ENCODE measurements at regions of chr10 and their contacts with region 1.

Region 1: GRCh38 chr10:88835096-88835909 is 16.3 kb downstream of the ANKRD22 start:
- DNase-seq: peak; percentile 92
- H3K4me3 Mint-ChIP-seq: no peak overlapping the region
- H3K27ac Mint-ChIP-seq: no peak overlapping the region
- H3K4me1 Mint-ChIP-seq: peaks cover 28% of the 10 kb centered on the region
- H3K27me3 Mint-ChIP-seq: no peaks in the 10 kb centered on the region

Region 2: DNA sequence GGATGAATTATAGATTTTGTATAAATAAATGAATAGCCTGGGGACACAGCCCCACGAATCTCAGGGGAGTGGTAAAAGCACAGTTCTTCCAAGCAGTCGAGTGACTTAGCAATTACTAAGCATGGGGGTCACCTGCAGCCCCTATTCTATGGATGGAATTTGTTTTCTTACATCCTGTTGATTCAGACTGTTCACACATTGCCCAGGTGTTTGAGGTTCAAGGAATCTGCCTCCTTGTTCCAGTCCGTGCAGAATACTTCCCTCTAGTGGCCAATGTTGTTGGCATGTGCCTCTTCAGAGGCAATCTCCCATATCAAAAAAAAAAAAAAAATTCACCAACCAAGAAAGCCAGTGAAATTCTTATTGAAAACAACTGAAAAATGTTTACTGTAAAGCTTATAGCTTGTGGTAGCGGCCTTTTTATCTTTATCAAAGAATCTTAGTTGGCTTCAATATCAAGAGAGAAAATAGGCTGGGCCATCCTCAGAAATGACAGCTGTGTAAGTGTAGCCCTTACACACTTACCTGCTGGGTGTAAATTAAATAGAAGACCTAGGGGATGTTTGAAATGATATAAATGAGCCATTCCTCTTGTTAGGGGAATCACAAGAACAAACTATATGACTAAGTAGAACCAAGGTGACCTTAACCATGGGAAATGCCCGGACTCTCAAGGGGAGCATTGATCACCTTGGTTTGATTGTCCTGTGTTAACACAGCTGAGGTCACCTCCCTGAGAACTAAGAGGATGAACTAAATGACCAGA is 24.9 kb before region 1 on chr10:
- CTCF ChIA-PET with region 1: interaction called, 13 read pairs
- POLR2A ChIA-PET with region 1: no interaction called
- intact Hi-C with region 1: no loop called
- DNase-seq: peak; percentile 31
- H3K4me3 Mint-ChIP-seq: no peak overlapping the region
- H3K27ac Mint-ChIP-seq: no peak overlapping the region
- H3K4me1 Mint-ChIP-seq: peaks cover 15% of the 10 kb centered on the region
- H3K27me3 Mint-ChIP-seq: no peaks in the 10 kb centered on the region

Region 3: GRCh38 chr10:88851706-88852105 is 16.4 kb after region 1 on chr10 and contains the start of gene ANKRD22:
- CTCF ChIA-PET with region 1: interaction called, 62 read pairs
- POLR2A ChIA-PET with region 1: interaction called, 4 read pairs
- intact Hi-C with region 1: loop called (anchors 2 kb)
- DNase-seq: no peak
- H3K4me3 Mint-ChIP-seq: no peak within 1 kb of the TSS
- H3K27ac Mint-ChIP-seq: no peak within 1 kb of the TSS
- H3K4me1 Mint-ChIP-seq: peaks cover 20% of the 10 kb centered on the region
- H3K27me3 Mint-ChIP-seq: peaks cover 6% of the 10 kb centered on the region
- total RNA-seq, gene ANKRD22: 0.12 to 0.24 TPM

Region 4: GRCh38 chr10:88880282-88881076 is 45.2 kb after region 1 on chr10:
- CTCF ChIA-PET with region 1: interaction called, 19 read pairs
- POLR2A ChIA-PET with region 1: interaction called, 5 read pairs
- intact Hi-C with region 1: loop called (anchors 1 kb)
- DNase-seq: peak; percentile 86
- H3K4me3 Mint-ChIP-seq: peak overlapping the region; percentile 88
- H3K27ac Mint-ChIP-seq: peak overlapping the region; percentile 95
- H3K4me1 Mint-ChIP-seq: peaks cover 59% of the 10 kb centered on the region
- H3K27me3 Mint-ChIP-seq: no peaks in the 10 kb centered on the region

Region 5: DNA sequence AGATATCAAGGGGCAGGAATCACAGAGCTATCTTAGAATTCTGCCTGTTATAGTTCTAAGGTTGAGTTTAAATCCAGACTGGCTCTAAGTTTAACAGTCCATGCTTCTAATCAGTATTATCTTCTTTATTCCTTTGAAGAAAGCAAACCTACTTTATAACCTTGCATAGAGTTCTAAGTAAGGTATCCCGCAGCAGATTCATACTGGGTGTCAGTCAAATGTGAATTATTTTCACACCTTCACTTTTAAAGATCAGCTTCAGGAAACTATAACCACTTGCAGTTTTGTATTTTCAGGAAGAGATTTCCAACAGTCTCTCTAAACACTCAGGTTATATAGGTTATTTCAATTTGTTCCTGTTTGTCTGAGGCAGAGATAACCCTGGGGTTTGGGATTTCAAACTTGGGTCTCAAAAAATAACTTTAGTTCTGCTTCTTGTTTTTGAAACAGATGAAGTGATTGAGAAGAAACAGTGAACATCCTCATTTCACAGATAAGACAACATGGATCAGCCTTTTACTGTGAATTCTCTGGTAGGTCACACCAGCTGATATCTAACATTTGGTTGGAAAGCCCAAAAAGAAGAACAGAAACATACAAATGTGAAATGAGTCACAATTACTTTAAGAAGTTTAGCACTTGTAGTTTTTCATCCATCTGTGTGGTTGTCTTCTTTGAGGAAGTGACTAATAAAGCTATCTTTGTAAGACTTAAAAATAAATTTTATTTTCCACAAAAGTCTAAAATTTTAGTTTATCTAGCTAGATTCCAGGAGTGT is 66.1 kb after region 1 on chr10:
- CTCF ChIA-PET with region 1: interaction called, 46 read pairs
- POLR2A ChIA-PET with region 1: interaction called, 3 read pairs
- intact Hi-C with region 1: loop called (anchors 1 kb)
- DNase-seq: no peak
- H3K4me3 Mint-ChIP-seq: no peak overlapping the region
- H3K27ac Mint-ChIP-seq: peak overlapping the region; percentile 85
- H3K4me1 Mint-ChIP-seq: peaks cover 54% of the 10 kb centered on the region
- H3K27me3 Mint-ChIP-seq: no peaks in the 10 kb centered on the region

Region 6: GRCh38 chr10:88923520-88923919 is 88.2 kb after region 1 on chr10:
- CTCF ChIA-PET with region 1: interaction called, 376 read pairs
- POLR2A ChIA-PET with region 1: no interaction called
- intact Hi-C with region 1: no loop called
- DNase-seq: no peak
- H3K4me3 Mint-ChIP-seq: no peak overlapping the region
- H3K27ac Mint-ChIP-seq: no peak overlapping the region
- H3K4me1 Mint-ChIP-seq: peaks cover 8% of the 10 kb centered on the region
- H3K27me3 Mint-ChIP-seq: no peaks in the 10 kb centered on the region

Region 7: GRCh38 chr10:89022734-89023133 is 187.4 kb after region 1 on chr10:
- CTCF ChIA-PET with region 1: no interaction called
- POLR2A ChIA-PET with region 1: no interaction called
- intact Hi-C with region 1: no loop called
- DNase-seq: no peak
- H3K4me3 Mint-ChIP-seq: no peak overlapping the region
- H3K27ac Mint-ChIP-seq: no peak overlapping the region
- H3K4me1 Mint-ChIP-seq: peaks cover 6% of the 10 kb centered on the region
- H3K27me3 Mint-ChIP-seq: no peaks in the 10 kb centered on the region

Region 8: DNA sequence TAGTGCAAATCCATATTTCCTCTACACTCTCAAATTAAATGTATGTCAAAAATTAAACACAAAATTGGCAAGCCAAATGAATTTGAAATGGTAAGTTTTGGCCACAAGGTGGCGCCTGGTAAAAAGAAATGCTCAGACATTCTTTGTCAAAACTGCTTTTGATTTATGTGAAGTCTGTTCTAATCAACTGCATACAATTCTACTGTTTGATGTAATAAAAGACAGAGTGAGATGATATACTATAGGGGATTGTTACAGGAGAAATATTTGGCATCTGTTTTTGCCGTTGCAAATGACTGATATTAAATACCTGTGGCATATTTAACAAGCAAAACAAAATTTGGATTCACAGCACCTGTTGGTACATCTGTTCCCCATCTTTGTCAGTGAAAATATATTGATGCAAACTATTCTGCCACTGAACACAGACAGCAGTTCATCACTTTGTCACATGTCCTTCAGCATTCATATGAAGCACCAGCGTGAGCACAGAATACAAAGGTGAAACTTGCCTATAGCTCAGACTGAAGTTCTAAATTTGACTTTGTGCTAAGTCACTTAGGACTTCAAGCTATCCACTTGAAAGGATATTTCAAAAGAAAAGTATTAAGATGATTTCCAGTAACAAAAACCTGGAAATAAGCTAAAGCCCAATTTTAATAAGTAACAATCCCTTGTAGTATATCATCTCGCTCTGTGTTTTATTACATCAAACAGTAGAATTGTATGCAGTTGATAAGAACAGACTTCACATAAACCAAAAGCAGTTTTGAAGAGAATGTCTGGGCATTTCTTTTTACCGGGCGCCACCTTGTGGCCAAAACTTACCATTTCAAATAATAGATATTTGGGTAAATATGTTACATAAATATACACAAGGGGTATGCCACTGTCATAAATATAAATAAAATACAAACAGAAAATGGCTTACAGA is 382.0 kb after region 1 on chr10:
- CTCF ChIA-PET with region 1: interaction called, 14 read pairs
- POLR2A ChIA-PET with region 1: no interaction called
- intact Hi-C with region 1: loop called (anchors 2 kb)
- DNase-seq: peak; percentile 70
- H3K4me3 Mint-ChIP-seq: no peak overlapping the region
- H3K27ac Mint-ChIP-seq: no peak overlapping the region
- H3K4me1 Mint-ChIP-seq: peaks cover 9% of the 10 kb centered on the region
- H3K27me3 Mint-ChIP-seq: no peaks in the 10 kb centered on the region

Measured in activated CD4-positive, alpha-beta memory T cell treated with anti-CD3 and anti-CD28 coated beads for 36 hours (primary cell).